ENCODE measurements at regions of chr10 and their contacts with region 1.

Region 1: GRCh38 chr10:37403776-37404175 is 278.4 kb downstream of the ANKRD30A start:
- ATAC-seq: no peak
- H3K4me3 ChIP-seq: no peak overlapping the region
- H3K27ac ChIP-seq: no peak overlapping the region
- H3K4me1 ChIP-seq: peaks cover 0 to 7% of the 10 kb centered on the region in 2 donors

Region 2: GRCh38 chr10:36634916-36635315 is 768.9 kb before region 1 on chr10:
- in situ Hi-C with region 1: no loop called
- ATAC-seq: no peak
- H3K4me3 ChIP-seq: no peak overlapping the region
- H3K27ac ChIP-seq: no peak overlapping the region
- H3K4me1 ChIP-seq: no peaks in the 10 kb centered on the region

Region 3: DNA sequence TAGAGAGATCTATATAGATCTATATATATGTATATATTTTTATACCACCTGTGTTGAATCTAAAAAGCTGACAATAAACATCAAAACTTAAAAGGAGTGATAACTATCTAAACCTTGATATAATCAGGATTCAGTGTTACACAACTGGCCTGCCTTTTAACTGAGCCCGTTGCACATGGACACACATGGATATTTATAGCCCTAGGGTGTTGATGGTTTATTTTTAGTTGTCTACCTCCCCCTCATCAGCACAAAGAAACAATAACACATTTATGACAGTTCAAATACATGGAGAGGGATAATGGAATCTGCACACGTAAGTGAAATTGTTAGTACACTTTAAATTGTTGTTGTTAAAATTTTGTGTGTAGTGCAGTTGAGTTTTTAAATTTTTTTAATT is 116.7 kb after region 1 on chr10:
- in situ Hi-C with region 1: loop called in 1 of 9 experiments (anchors 25 kb)
- ATAC-seq: no peak
- H3K4me3 ChIP-seq: no peak overlapping the region
- H3K27ac ChIP-seq: no peak overlapping the region
- H3K4me1 ChIP-seq: peaks cover 0 to 10% of the 10 kb centered on the region in 2 donors

Measured in motor neuron (in vitro differentiated cells).